ENCODE measurements at regions of chr3 and their contacts with region 1.

Region 1: GRCh38 chr3:128123538-128124368 is at the start of gene RUVBL1:
- DNase-seq: peak; percentile 98
- H3K4me3 ChIP-seq: peak within 1 kb of the TSS; percentile 59 to 85 (median 78)
- H3K27ac ChIP-seq: peak within 1 kb of the TSS; percentile 65
- H3K4me1 ChIP-seq: peaks cover 12% of the 10 kb centered on the region
- H3K27me3 ChIP-seq: peaks cover 0 to 2% of the 10 kb centered on the region in 2 experiments
- CTCF ChIP-seq: no peak
- POLR2A ChIP-seq: peak; percentile 67
- total RNA-seq, gene RUVBL1: 57.0 and 58.5 TPM in 2 replicates

Region 2: DNA sequence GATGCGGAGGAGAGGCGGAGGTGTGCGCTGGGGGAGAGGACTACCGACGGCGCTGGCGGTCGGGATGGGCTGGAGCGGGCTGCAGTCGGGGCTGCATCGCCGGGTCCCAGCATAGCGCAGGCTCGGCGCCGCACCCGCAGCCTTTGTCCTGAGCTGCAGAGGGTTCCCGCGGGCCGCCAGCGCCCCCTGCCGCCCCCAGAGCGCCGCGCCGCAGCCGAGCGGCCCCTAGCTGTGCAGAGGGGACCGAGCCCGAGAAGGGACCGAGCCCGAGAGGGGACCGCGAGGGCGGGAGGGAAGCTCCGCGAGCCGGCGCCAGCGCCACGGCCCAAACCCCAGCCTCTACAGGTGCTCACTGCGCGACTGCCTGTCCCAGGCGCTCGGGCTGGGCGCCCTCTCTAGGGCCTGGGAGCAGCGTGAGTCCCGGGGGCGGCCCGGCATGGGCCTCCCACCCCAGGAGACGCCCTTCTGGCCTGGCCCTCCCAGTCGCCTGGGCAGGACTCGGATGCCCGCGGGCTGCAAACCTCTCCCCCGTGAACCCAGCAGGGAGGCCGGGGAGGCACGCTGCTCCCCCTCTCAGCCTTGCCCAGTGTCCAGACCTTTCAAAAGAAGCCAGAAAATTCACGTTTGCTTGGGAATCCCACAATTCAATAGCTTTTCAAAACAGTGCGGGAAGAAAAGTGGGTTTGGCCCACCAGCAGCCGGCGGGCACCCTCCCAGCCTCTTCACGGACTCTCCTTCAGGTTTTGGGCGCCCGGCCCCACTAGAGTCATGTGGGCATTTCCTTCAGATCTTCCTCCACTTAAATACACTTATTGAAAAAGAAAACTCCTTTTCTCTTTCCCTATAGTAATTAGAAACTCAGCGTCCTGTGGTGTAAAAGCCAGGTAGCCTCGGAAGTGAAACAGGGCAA is 668.0 kb before region 1 on chr3:
- CTCF ChIA-PET with region 1: no interaction called
- POLR2A ChIA-PET with region 1: no interaction called
- dilution Hi-C with region 1: no loop called
- intact Hi-C with region 1: no loop called
- DNase-seq: peak; percentile 54
- H3K4me3 ChIP-seq: no peak overlapping the region
- H3K27ac ChIP-seq: no peak overlapping the region
- H3K4me1 ChIP-seq: peaks cover 13% of the 10 kb centered on the region
- H3K27me3 ChIP-seq: peaks cover 18 to 34% of the 10 kb centered on the region in 2 experiments
- CTCF ChIP-seq: peak; percentile 84 to 94
- POLR2A ChIP-seq: no peak

Region 3: GRCh38 chr3:128075516-128076482 is 48.0 kb before region 1 on chr3:
- CTCF ChIA-PET with region 1: interaction called, 7 read pairs
- POLR2A ChIA-PET with region 1: no interaction called
- dilution Hi-C with region 1: no loop called
- intact Hi-C with region 1: loop called (anchors 2 kb)
- DNase-seq: peak; percentile 94
- H3K4me3 ChIP-seq: peak overlapping the region in 2 of 3 experiments; percentile 16 to 44
- H3K27ac ChIP-seq: peak overlapping the region; percentile 33
- H3K4me1 ChIP-seq: peaks cover 51% of the 10 kb centered on the region
- H3K27me3 ChIP-seq: no peaks in the 10 kb centered on the region
- CTCF ChIP-seq: peak; percentile 95 to 98
- POLR2A ChIP-seq: peak; percentile 55

Region 4: GRCh38 chr3:128112357-128112968 is 11.3 kb before region 1 on chr3:
- CTCF ChIA-PET with region 1: interaction called, 26 read pairs
- POLR2A ChIA-PET with region 1: interaction called, 5 read pairs
- dilution Hi-C with region 1: no loop called
- intact Hi-C with region 1: loop called (anchors 1 kb)
- DNase-seq: peak; percentile 89
- H3K4me3 ChIP-seq: no peak overlapping the region
- H3K27ac ChIP-seq: peak overlapping the region; percentile 36
- H3K4me1 ChIP-seq: peaks cover 14% of the 10 kb centered on the region
- H3K27me3 ChIP-seq: no peaks in the 10 kb centered on the region
- CTCF ChIP-seq: no peak
- POLR2A ChIP-seq: no peak

Region 5: GRCh38 chr3:128226795-128227395 is 103.1 kb after region 1 on chr3:
- CTCF ChIA-PET with region 1: no interaction called
- POLR2A ChIA-PET with region 1: no interaction called
- dilution Hi-C with region 1: no loop called
- intact Hi-C with region 1: no loop called
- DNase-seq: peak; percentile 59
- H3K4me3 ChIP-seq: no peak overlapping the region
- H3K27ac ChIP-seq: no peak overlapping the region
- H3K4me1 ChIP-seq: no peaks in the 10 kb centered on the region
- H3K27me3 ChIP-seq: no peaks in the 10 kb centered on the region
- CTCF ChIP-seq: peak; percentile 89 to 98
- POLR2A ChIP-seq: no peak

Measured in endothelial cell of umbilical vein (primary cell).